ENCODE measurements at regions of chr1 and their contacts with region 1.

Region 1: GRCh38 chr1:66725885-66726665 is 26.2 kb upstream of the DYNLT5 start:
- DNase-seq: no peak
- ATAC-seq: peak; percentile 85
- H3K4me3 Mint-ChIP-seq: no peak overlapping the region
- H3K27ac Mint-ChIP-seq: no peak overlapping the region
- H3K4me1 Mint-ChIP-seq: no peaks in the 10 kb centered on the region
- H3K27me3 Mint-ChIP-seq: peaks cover 19% of the 10 kb centered on the region
- CTCF ChIP-seq: peak; percentile 93

Region 2: DNA sequence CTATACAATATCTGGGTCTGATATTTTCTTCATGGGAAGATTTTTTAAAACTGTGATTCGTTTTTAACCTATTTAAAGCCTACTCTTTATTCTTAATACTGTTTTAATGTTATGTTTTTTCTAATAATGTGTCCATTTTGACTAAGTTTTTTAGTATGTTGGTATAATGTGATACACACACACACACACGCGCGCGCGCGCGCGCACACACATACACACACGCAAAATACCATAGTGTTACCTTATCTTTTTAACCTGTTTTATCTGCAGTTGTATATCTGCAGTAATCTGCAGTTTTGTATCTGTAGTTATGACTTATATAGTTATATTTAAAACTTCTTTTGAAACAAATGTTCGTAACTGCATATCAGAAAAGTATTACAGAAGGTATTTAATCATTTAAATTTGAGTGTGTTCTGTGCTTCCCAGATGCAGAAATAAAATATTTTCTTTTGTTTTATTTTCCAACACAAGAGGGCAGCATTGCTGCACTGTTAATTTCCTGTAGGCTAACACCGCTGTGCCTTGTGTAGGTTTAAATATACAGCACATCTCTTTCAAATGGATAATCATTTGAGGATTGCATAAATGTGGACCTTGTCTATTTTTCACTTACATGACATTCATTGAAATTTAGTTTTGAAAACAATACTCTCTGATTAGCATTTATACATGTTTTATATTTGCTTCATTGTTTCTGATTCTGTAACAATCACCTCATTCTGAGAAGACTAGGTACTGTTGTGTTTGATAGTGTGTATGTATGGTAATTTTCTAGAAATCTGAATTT is 767.3 kb before region 1 on chr1:
- CTCF ChIA-PET with region 1: interaction called, 4 read pairs
- POLR2A ChIA-PET with region 1: no interaction called
- intact Hi-C with region 1: loop called (anchors 1 kb)
- DNase-seq: no peak
- ATAC-seq: peak; percentile 40
- H3K4me3 Mint-ChIP-seq: no peak overlapping the region
- H3K27ac Mint-ChIP-seq: no peak overlapping the region
- H3K4me1 Mint-ChIP-seq: peaks cover 4% of the 10 kb centered on the region
- H3K27me3 Mint-ChIP-seq: no peaks in the 10 kb centered on the region
- CTCF ChIP-seq: peak; percentile 44

Region 3: DNA sequence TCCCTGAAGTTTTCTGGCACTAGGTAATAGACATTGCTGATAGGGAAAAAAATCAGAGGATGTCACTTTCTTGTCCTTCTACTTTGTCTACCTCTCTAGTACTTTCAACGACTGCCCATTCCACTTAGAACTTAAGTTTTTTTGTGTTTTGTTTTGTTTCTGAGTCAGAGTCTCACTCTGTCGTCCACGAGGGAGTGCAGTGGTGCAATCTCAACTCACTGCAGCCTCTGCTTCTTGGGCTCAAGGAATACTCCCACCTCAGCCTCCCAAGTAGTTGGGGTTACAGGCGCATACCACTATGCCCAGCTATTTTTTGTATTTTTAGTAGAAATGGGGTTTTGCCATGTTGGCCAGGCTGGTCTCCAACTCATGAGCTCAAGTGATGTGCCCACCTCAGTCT is 112.9 kb before region 1 on chr1:
- CTCF ChIA-PET with region 1: no interaction called
- POLR2A ChIA-PET with region 1: no interaction called
- intact Hi-C with region 1: no loop called
- DNase-seq: no peak
- ATAC-seq: no peak
- H3K4me3 Mint-ChIP-seq: no peak overlapping the region
- H3K27ac Mint-ChIP-seq: no peak overlapping the region
- H3K4me1 Mint-ChIP-seq: no peaks in the 10 kb centered on the region
- H3K27me3 Mint-ChIP-seq: peaks cover 2% of the 10 kb centered on the region
- CTCF ChIP-seq: no peak

Region 4: DNA sequence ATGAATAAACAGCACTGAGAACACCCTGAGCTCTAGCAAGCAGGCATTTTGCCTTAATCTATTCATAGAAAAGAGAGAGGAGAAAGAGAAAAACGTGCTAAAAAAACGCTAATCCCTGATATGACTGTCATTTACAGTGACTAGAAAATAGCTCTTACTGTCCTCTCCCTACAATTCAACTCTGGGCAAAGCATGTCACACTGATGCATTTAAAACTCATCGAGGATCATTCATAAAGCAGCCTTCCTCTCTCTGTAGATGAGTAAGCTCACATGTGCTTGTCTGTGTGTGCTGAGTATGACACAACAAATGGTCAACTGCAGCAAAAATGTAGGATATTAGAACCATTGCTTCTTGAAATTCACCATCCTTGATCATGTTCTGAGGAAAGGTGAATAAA is 83.1 kb before region 1 on chr1:
- CTCF ChIA-PET with region 1: no interaction called
- POLR2A ChIA-PET with region 1: no interaction called
- intact Hi-C with region 1: no loop called
- DNase-seq: no peak
- ATAC-seq: no peak
- H3K4me3 Mint-ChIP-seq: no peak overlapping the region
- H3K27ac Mint-ChIP-seq: no peak overlapping the region
- H3K4me1 Mint-ChIP-seq: peaks cover under 1% of the 10 kb centered on the region
- H3K27me3 Mint-ChIP-seq: peaks cover 5% of the 10 kb centered on the region
- CTCF ChIP-seq: no peak

Region 5: GRCh38 chr1:66711420-66711819 is 14.7 kb before region 1 on chr1:
- CTCF ChIA-PET with region 1: interaction called, 10 read pairs
- POLR2A ChIA-PET with region 1: no interaction called
- intact Hi-C with region 1: no loop called
- DNase-seq: no peak
- ATAC-seq: no peak
- H3K4me3 Mint-ChIP-seq: no peak overlapping the region
- H3K27ac Mint-ChIP-seq: no peak overlapping the region
- H3K4me1 Mint-ChIP-seq: no peaks in the 10 kb centered on the region
- H3K27me3 Mint-ChIP-seq: peaks cover 12% of the 10 kb centered on the region
- CTCF ChIP-seq: no peak

Region 6: DNA sequence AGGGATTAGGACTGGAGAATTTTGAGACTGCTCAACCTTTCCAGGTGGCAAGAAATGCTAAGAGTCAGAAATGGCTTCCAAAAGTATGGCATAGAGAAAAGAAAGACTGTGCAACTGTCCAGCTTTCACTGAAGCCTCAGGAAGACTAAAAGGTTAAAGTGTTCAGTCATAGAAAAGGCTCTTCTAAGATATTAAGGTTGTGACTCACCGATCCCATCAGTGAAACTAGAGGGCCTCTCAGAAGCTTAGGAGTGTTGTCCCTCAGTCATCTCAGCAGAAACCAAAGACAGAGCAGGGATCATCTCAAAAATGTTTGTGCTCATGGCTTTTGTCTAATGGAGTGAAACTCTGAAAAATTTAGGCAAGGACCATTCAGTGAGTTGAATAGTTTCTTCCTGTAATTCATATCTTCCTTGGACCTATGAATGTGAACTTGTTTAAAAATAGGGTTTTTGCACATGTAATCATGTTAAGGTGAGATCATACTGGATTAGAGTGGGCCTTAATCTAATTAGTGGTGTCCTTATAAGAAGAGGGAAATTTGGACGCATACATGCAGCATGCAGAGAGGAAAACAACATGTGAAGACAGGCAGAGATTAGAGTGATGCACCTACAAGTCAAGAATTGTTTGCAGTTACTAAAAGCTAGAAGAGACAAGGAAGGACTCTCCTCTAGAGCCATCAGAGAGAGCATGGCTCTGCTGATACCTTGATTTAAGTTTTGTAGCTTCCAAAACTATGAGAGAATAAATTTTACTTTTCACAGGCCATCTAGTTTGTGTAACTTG is 1652.4 kb after region 1 on chr1:
- CTCF ChIA-PET with region 1: no interaction called
- POLR2A ChIA-PET with region 1: no interaction called
- intact Hi-C with region 1: no loop called
- DNase-seq: no peak
- ATAC-seq: no peak
- H3K4me3 Mint-ChIP-seq: no peak overlapping the region
- H3K27ac Mint-ChIP-seq: no peak overlapping the region
- H3K4me1 Mint-ChIP-seq: peaks cover 4% of the 10 kb centered on the region
- H3K27me3 Mint-ChIP-seq: peaks cover 2% of the 10 kb centered on the region
- CTCF ChIP-seq: no peak

Measured in activated B cell treated with CpG ODN at 0.5 μM for 24 hours (primary cell).